ENCODE measurements at regions of chr12 and their contacts with region 1.

Region 1: GRCh38 chr12:10749700-10750384 is 26.7 kb upstream of the YBX3 start:
- DNase-seq: peak; percentile 84
- ATAC-seq: peak; percentile 94
- H3K4me3 ChIP-seq: peak overlapping the region; percentile 29 to 58 (median 42); a peak in 5 of 6 replicates
- H3K27ac ChIP-seq: no peak overlapping the region
- H3K4me1 ChIP-seq: peaks cover 16% of the 10 kb centered on the region; the same call in 1 of the 2 replicates
- H3K27me3 ChIP-seq: no peaks in the 10 kb centered on the region; a peak in 1 of 5 replicates
- CTCF ChIP-seq: peak; percentile 87
- EP300 ChIP-seq: no peak
- POLR2A ChIP-seq: no peak
- RAD21 ChIP-seq: peak; percentile 84

Region 2: GRCh38 chr12:10082117-10082874 is 667.5 kb before region 1 on chr12:
- CTCF ChIA-PET with region 1: no interaction called
- POLR2A ChIA-PET with region 1: no interaction called
- in situ Hi-C with region 1: no loop called
- intact Hi-C with region 1: no loop called
- DNase-seq: no peak
- ATAC-seq: no peak
- H3K4me3 ChIP-seq: no peak overlapping the region
- H3K27ac ChIP-seq: no peak overlapping the region
- H3K4me1 ChIP-seq: no peaks in the 10 kb centered on the region
- H3K27me3 ChIP-seq: no peaks in the 10 kb centered on the region
- CTCF ChIP-seq: no peak
- EP300 ChIP-seq: no peak
- POLR2A ChIP-seq: no peak
- RAD21 ChIP-seq: no peak

Region 3: GRCh38 chr12:10235761-10236631 is 513.8 kb before region 1 on chr12:
- CTCF ChIA-PET with region 1: interaction called, 8 read pairs
- POLR2A ChIA-PET with region 1: no interaction called
- in situ Hi-C with region 1: no loop called
- intact Hi-C with region 1: loop called (anchors 2 kb)
- DNase-seq: peak; percentile 17
- ATAC-seq: peak; percentile 67
- H3K4me3 ChIP-seq: no peak overlapping the region
- H3K27ac ChIP-seq: no peak overlapping the region
- H3K4me1 ChIP-seq: no peaks in the 10 kb centered on the region
- H3K27me3 ChIP-seq: 0 out of 5 replicates have a peak, but pooled peaks cover 0 to 1% of the 10 kb centered on the region in 2 experiments
- CTCF ChIP-seq: peak; percentile 81
- EP300 ChIP-seq: no peak
- POLR2A ChIP-seq: no peak
- RAD21 ChIP-seq: 0 out of 2 replicates have a peak, but pooled peaks have one; percentile 37

Region 4: GRCh38 chr12:10607885-10608458 is 141.9 kb before region 1 on chr12:
- CTCF ChIA-PET with region 1: no interaction called
- POLR2A ChIA-PET with region 1: no interaction called
- in situ Hi-C with region 1: no loop called
- intact Hi-C with region 1: loop called (anchors 5 kb)
- DNase-seq: no peak
- ATAC-seq: no peak
- H3K4me3 ChIP-seq: no peak overlapping the region
- H3K27ac ChIP-seq: no peak overlapping the region
- H3K4me1 ChIP-seq: peaks cover 26% of the 10 kb centered on the region
- H3K27me3 ChIP-seq: no peaks in the 10 kb centered on the region; a peak in 1 of 5 replicates
- CTCF ChIP-seq: no peak
- EP300 ChIP-seq: no peak
- POLR2A ChIP-seq: no peak
- RAD21 ChIP-seq: no peak

Region 5: GRCh38 chr12:10721651-10722501 is 28.0 kb before region 1 on chr12:
- CTCF ChIA-PET with region 1: interaction called, 11 read pairs
- POLR2A ChIA-PET with region 1: interaction called, 5 read pairs
- in situ Hi-C with region 1: no loop called
- intact Hi-C with region 1: loop called (anchors 1 kb)
- DNase-seq: peak; percentile 81
- ATAC-seq: peak; percentile 66
- H3K4me3 ChIP-seq: peak overlapping the region; percentile 84 to 99 (median 93)
- H3K27ac ChIP-seq: peak overlapping the region; percentile 80
- H3K4me1 ChIP-seq: peaks cover 54% of the 10 kb centered on the region
- H3K27me3 ChIP-seq: peaks cover 0 to 11% of the 10 kb centered on the region in 2 experiments; a peak in 2 of 5 replicates
- CTCF ChIP-seq: peak; percentile 14; the same call in 1 of the 2 replicates
- EP300 ChIP-seq: 0 out of 4 replicates have a peak, but pooled peaks of 1 of the 2 experiments have one; percentile 24
- POLR2A ChIP-seq: peak; percentile 44; a peak in 2 of 4 replicates
- RAD21 ChIP-seq: no peak

Measured in HepG2 (cell line).